Pancreas (tissue), 10 donors: ENCODE measurements at regions of chr22 and their contacts with region 1.

Region 1: GRCh38 chr22:37599153-37599552 is 9.5 kb upstream of the GGA1 start:
- DNase-seq: no peak
- ATAC-seq: no peak
- H3K4me3 ChIP-seq: no peak overlapping the region
- H3K27ac ChIP-seq: peak overlapping the region in 1 of 4 donors; percentile 11
- H3K4me1 ChIP-seq: peaks cover 0 to 7% (median 6%) of the 10 kb centered on the region in 3 donors
- H3K27me3 ChIP-seq: no peaks in the 10 kb centered on the region
- CTCF ChIP-seq: no peak

Region 2: GRCh38 chr22:37316875-37317371 is 282.2 kb before region 1 on chr22:
- intact Hi-C with region 1: no loop called
- DNase-seq: peak; percentile 65 to 88 (median 78)
- ATAC-seq: peak; percentile 92 to 97 (median 94)
- H3K4me3 ChIP-seq: no peak overlapping the region
- H3K27ac ChIP-seq: no peak overlapping the region
- H3K4me1 ChIP-seq: no peaks in the 10 kb centered on the region
- H3K27me3 ChIP-seq: no peaks in the 10 kb centered on the region
- CTCF ChIP-seq: peak; percentile 58 to 81 (median 74)

Region 3: DNA sequence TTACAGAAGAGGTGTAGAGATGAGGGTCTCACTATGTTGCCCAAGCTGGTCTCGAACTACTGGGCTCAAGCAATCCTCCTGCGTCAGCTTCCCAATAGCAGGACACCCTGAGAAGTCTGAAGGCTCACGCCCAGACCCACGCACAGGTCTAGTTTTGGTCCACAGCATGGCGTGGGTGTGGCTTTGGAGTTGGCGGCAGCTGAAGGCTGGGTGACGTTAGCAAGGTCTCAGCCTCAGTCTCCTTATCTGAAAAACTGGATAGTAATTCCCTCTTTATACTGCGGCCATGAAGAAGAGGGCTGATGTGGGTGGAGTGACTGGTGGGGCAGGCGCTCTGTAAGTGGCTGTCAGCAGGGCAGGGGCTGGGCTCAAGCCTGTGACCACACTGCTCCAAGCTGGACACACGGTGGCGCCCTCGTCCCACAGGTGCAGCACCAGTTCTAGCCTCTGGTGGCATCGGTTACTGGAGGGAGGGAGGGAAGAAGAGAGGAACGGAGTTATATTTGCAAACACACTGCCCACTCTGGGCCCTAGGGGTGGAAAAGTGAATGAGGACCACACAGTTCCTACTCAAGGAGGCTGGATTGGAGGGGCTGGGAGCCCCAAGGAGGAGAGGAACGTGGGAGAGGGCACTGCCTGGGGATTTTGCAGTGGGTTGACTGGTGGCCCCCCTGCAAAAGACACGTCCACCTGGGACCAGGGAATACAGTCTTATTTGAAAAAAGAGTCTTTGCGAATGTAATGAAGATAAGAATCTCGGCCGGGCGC is 60.4 kb before region 1 on chr22:
- intact Hi-C with region 1: loop called in 2 of 3 experiments (anchors 5 to 10 kb)
- DNase-seq: peak; percentile 92 to 98 (median 94)
- ATAC-seq: peak; percentile 96 to 97 (median 97)
- H3K4me3 ChIP-seq: no peak overlapping the region
- H3K27ac ChIP-seq: no peak overlapping the region
- H3K4me1 ChIP-seq: peaks cover 0 to 8% (median 4%) of the 10 kb centered on the region in 3 donors
- H3K27me3 ChIP-seq: no peaks in the 10 kb centered on the region
- CTCF ChIP-seq: peak; percentile 82 to 97 (median 95)

Region 4: GRCh38 chr22:37544955-37545699 is 54.0 kb before region 1 on chr22:
- intact Hi-C with region 1: loop called in 1 of 3 experiments (anchors 10 kb)
- DNase-seq: peak; percentile 80 to 90 (median 88)
- ATAC-seq: peak; percentile 63 to 71 (median 66)
- H3K4me3 ChIP-seq: peak overlapping the region in 1 of 4 donors; percentile 7
- H3K27ac ChIP-seq: peak overlapping the region; percentile 88 to 96 (median 91)
- H3K4me1 ChIP-seq: peaks cover 36 to 44% (median 39%) of the 10 kb centered on the region in 3 donors
- H3K27me3 ChIP-seq: no peaks in the 10 kb centered on the region
- CTCF ChIP-seq: peak; percentile 57 to 65 (median 62)